ENCODE measurements at regions of chr2 and their contacts with region 1.

Region 1: DNA sequence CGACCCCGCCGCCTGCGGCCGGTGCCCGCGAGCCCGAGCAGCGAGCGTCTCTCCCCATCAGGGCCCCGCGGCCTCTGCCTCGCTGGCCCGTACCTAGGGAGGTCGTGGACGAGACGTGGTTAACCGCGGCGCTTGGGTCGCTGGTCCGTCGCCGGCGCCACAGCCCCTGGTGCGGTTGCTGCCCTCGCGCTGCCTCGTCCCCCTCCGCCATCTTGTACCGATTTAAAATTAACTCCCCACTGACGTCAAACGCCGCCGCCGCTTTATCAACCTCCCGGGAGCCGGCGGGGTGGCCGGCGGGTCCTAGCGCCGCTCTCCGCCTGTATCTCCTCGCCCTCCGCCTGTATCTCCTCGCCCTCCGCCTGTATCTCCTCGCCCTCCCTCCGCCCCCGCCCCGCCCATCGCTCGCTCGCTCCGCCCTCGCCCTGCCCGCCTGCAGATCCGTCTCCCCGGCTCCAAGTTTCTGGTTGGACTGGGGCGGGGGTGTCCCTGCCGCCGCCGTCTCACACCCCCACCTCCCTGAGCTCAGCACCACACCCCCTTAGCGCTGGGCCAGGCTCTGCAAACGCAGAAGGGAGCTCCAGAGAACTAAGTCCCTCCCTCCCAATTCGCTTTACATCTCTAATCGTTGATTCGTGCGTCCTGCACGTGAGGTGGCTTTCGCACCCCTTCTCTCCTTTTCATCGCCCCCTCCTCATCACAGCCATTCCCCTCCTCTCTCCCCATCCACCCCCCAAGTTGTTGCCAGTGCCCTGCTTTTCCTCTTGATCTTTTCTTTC is at the start of gene ATL2:
- DNase-seq: peak; percentile 87 to 96 (median 93)
- ATAC-seq: peak; percentile 80
- H3K4me3 ChIP-seq: peak within 1 kb of the TSS; percentile 71 to 93
- H3K4me3 Mint-ChIP-seq: peak within 1 kb of the TSS; percentile 97
- H3K27ac ChIP-seq: peak within 1 kb of the TSS; percentile 84 to 91
- H3K27ac Mint-ChIP-seq: peak within 1 kb of the TSS; percentile 96
- H3K4me1 ChIP-seq: peaks cover 35% of the 10 kb centered on the region
- H3K4me1 Mint-ChIP-seq: peaks cover 69% of the 10 kb centered on the region
- H3K27me3 ChIP-seq: no peaks in the 10 kb centered on the region
- H3K27me3 Mint-ChIP-seq: no peaks in the 10 kb centered on the region
- CTCF ChIP-seq: no peak
- total RNA-seq, gene ATL2: 76.4 to 88.2 TPM

Region 2: DNA sequence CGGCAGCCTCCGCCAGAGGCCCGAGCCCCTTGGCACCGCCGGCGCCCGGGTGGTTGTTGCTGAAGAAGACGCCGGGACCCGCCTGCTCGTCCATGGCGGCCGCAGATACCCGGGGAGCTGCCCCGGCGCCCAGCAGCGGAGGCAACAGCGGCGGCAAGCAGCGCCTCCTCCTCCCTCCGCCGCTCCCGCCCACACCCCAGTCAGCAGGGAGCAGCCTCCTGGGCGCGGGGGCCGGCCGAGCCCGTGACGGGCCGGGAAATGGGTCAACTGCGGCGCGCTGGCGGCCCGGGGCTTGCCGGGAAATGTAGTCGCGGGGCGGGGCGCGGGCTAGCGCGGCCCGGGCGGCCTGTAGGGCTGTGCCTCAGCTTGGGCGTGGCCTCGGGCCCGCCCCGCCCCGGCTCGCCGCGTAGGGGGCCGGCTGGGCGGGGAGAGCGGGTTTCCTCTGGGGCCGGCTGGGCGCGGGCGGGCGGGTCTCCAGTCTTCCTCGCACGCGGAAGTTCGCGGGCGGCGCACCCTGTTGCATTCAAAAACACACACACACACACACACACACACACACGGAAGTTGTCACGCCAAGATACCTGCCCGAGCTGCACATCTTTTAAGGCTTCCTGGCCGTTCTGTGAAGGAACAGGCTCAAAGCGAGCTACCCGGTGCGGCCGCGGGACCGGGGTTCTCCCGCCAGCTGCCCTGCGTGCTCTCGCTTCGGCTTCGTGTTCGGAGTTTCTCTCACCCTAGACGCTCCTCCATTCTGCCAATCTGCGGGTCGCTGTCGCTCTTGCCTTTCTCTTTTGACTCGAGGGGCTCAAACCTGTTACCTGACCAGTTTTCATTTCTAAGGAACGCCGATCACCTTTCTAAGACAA is 1410.6 kb before region 1 on chr2 and contains the start of gene STRN:
- CTCF ChIA-PET with region 1: no interaction called
- POLR2A ChIA-PET with region 1: no interaction called
- intact Hi-C with region 1: loop called (anchors 5 to 10 kb)
- DNase-seq: peak; percentile 94 to 99 (median 98)
- ATAC-seq: peak; percentile 91
- H3K4me3 ChIP-seq: peak within 1 kb of the TSS; percentile 69 to 96
- H3K4me3 Mint-ChIP-seq: peak within 1 kb of the TSS; percentile 98
- H3K27ac ChIP-seq: peak within 1 kb of the TSS; percentile 76 to 97
- H3K27ac Mint-ChIP-seq: peak within 1 kb of the TSS; percentile 99
- H3K4me1 ChIP-seq: peaks cover 19% of the 10 kb centered on the region
- H3K4me1 Mint-ChIP-seq: peaks cover 50% of the 10 kb centered on the region
- H3K27me3 ChIP-seq: no peaks in the 10 kb centered on the region
- H3K27me3 Mint-ChIP-seq: no peaks in the 10 kb centered on the region
- CTCF ChIP-seq: no peak
- total RNA-seq, gene STRN: 15.6 to 17.4 TPM

Region 3: GRCh38 chr2:37925063-37925897 is 452.0 kb before region 1 on chr2 and contains the start of gene RMDN2:
- CTCF ChIA-PET with region 1: no interaction called
- POLR2A ChIA-PET with region 1: no interaction called
- intact Hi-C with region 1: loop called in 1 of 2 experiments (anchors 5 kb)
- DNase-seq: peak; percentile 37 to 92 (median 77)
- ATAC-seq: peak; percentile 80
- H3K4me3 ChIP-seq: peak within 1 kb of the TSS; percentile 68 to 82
- H3K4me3 Mint-ChIP-seq: peak within 1 kb of the TSS; percentile 92
- H3K27ac ChIP-seq: peak within 1 kb of the TSS; percentile 68 to 79
- H3K27ac Mint-ChIP-seq: peak within 1 kb of the TSS; percentile 92
- H3K4me1 ChIP-seq: peaks cover 11% of the 10 kb centered on the region
- H3K4me1 Mint-ChIP-seq: peaks cover 32% of the 10 kb centered on the region
- H3K27me3 ChIP-seq: peaks cover 0 to 2% of the 10 kb centered on the region in 2 experiments
- H3K27me3 Mint-ChIP-seq: no peaks in the 10 kb centered on the region
- CTCF ChIP-seq: no peak
- total RNA-seq, gene RMDN2: 3.4 to 3.9 TPM

Region 4: GRCh38 chr2:38344813-38345212 is 32.4 kb before region 1 on chr2:
- CTCF ChIA-PET with region 1: no interaction called
- POLR2A ChIA-PET with region 1: interaction called, 4 read pairs
- intact Hi-C with region 1: loop called in 1 of 2 experiments (anchors 5 kb)
- DNase-seq: no peak
- ATAC-seq: no peak
- H3K4me3 ChIP-seq: no peak overlapping the region
- H3K4me3 Mint-ChIP-seq: no peak overlapping the region
- H3K27ac ChIP-seq: no peak overlapping the region
- H3K27ac Mint-ChIP-seq: no peak overlapping the region
- H3K4me1 ChIP-seq: no peaks in the 10 kb centered on the region
- H3K4me1 Mint-ChIP-seq: no peaks in the 10 kb centered on the region
- H3K27me3 ChIP-seq: no peaks in the 10 kb centered on the region
- H3K27me3 Mint-ChIP-seq: no peaks in the 10 kb centered on the region
- CTCF ChIP-seq: no peak

Region 5: DNA sequence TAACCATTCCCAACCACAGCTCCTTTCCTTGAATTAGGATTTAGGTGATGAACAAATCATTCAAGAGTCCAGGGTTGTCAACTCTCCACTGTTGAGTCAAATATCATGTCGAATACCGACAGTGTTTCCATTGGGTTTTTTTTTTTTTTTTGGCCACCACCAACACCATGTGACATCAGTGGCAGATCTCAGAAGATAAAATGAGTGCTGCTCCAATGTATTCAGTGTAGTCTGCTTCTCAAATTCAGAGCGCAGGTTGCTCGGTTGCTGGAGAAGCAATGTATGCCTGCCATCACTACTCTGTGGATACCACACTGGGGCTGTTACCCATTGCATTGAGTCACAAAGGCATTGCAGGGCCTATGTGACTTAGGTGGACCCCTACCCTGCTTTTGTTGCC is 10.6 kb after region 1 on chr2:
- CTCF ChIA-PET with region 1: interaction called, 6 read pairs
- POLR2A ChIA-PET with region 1: interaction called, 5 read pairs
- intact Hi-C with region 1: loop called in 1 of 2 experiments (anchors 1 kb)
- DNase-seq: peak in 3 of 9 experiments; percentile 16 to 35 (median 17)
- ATAC-seq: peak; percentile 57
- H3K4me3 ChIP-seq: no peak overlapping the region
- H3K4me3 Mint-ChIP-seq: no peak overlapping the region
- H3K27ac ChIP-seq: no peak overlapping the region
- H3K27ac Mint-ChIP-seq: no peak overlapping the region
- H3K4me1 ChIP-seq: peaks cover 15% of the 10 kb centered on the region
- H3K4me1 Mint-ChIP-seq: peaks cover 21% of the 10 kb centered on the region
- H3K27me3 ChIP-seq: no peaks in the 10 kb centered on the region
- H3K27me3 Mint-ChIP-seq: peaks cover 9% of the 10 kb centered on the region
- CTCF ChIP-seq: no peak

Measured in CD8-positive, alpha-beta T cell (primary cell).